ENCODE measurements at regions of chr19 and their contacts with region 1.

Region 1: GRCh38 chr19:771332-771785 is 20.4 kb downstream of the MISP start:
- DNase-seq: no peak
- H3K4me3 ChIP-seq: no peak overlapping the region
- H3K27ac ChIP-seq: no peak overlapping the region
- H3K4me1 ChIP-seq: no peaks in the 10 kb centered on the region; a peak in 1 of 7 replicates
- H3K27me3 ChIP-seq: no peaks in the 10 kb centered on the region
- CTCF ChIP-seq: peak; percentile 41 to 59 (median 43); a peak in 3 of 4 replicates
- EP300 ChIP-seq: no peak
- POLR2A ChIP-seq: no peak
- RAD21 ChIP-seq: peak; percentile 29 to 35; a peak in 2 of 4 replicates

Region 2: DNA sequence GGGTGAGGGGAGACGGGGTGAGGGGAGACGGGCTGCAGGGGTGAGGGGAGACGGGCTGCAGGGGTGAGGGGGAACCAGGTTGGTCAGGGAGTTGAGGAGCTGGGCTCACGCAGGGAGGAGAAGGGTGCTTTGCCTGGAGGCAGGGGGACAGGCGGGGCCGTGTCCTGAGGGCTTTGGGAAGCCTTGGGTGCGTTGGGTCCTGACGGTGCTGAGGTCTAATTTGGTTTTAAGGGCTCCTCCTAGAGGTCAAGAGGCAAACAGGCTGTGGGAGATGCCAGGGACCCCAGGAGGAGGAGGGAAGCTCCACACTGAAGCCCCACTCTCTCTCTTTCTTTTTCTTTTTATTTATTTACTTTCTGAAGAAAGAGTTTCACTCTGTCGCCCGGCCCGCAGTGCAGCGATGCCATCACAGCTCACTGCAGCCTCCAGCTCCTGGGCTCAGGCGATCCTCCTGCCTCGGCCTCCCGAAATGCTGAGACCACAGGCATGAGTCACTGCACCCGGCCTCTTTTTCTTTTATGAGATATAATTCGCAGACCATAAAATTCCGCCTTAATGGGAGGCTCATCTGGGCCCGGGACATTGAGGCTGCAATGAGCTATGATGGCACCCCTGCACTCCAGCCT is 29.7 kb before region 1 on chr19:
- CTCF ChIA-PET with region 1: interaction called, 10 read pairs
- POLR2A ChIA-PET with region 1: interaction called, 3 read pairs
- DNase-seq: peak in 1 of 2 experiments; percentile 31
- H3K4me3 ChIP-seq: no peak overlapping the region
- H3K27ac ChIP-seq: no peak overlapping the region
- H3K4me1 ChIP-seq: no peaks in the 10 kb centered on the region
- H3K27me3 ChIP-seq: no peaks in the 10 kb centered on the region
- CTCF ChIP-seq: peak; percentile 63 to 73 (median 70)
- EP300 ChIP-seq: no peak
- POLR2A ChIP-seq: no peak
- RAD21 ChIP-seq: peak; percentile 12 to 45; a peak in 3 of 4 replicates

Region 3: GRCh38 chr19:788983-789700 is 17.8 kb after region 1 on chr19:
- CTCF ChIA-PET with region 1: interaction called, 23 read pairs
- POLR2A ChIA-PET with region 1: interaction called, 16 read pairs
- DNase-seq: peak in 1 of 2 experiments; percentile 74
- H3K4me3 ChIP-seq: no peak overlapping the region
- H3K27ac ChIP-seq: peak overlapping the region; percentile 42; the same call in 1 of the 2 replicates
- H3K4me1 ChIP-seq: peaks cover 0 to 36% (median 16%) of the 10 kb centered on the region in 4 experiments; a peak in 6 of 7 replicates
- H3K27me3 ChIP-seq: no peaks in the 10 kb centered on the region
- CTCF ChIP-seq: peak in 2 of 3 experiments; percentile 11 to 14; a peak in 2 of 4 replicates
- EP300 ChIP-seq: no peak
- POLR2A ChIP-seq: no peak
- RAD21 ChIP-seq: peak in 1 of 2 experiments; percentile 14; a peak in 1 of 4 replicates

Region 4: GRCh38 chr19:855565-856274 is 84.4 kb after region 1 on chr19:
- CTCF ChIA-PET with region 1: interaction called, 11 read pairs
- POLR2A ChIA-PET with region 1: interaction called, 5 read pairs
- DNase-seq: no peak
- H3K4me3 ChIP-seq: no peak overlapping the region
- H3K27ac ChIP-seq: no peak overlapping the region
- H3K4me1 ChIP-seq: no peaks in the 10 kb centered on the region; a peak in 2 of 7 replicates
- H3K27me3 ChIP-seq: peaks cover 8 to 18% (median 11%) of the 10 kb centered on the region in 4 experiments
- CTCF ChIP-seq: no peak
- EP300 ChIP-seq: no peak
- POLR2A ChIP-seq: no peak
- RAD21 ChIP-seq: no peak

Region 5: GRCh38 chr19:888581-889385 is 117.4 kb after region 1 on chr19:
- CTCF ChIA-PET with region 1: no interaction called
- POLR2A ChIA-PET with region 1: no interaction called
- DNase-seq: no peak
- H3K4me3 ChIP-seq: no peak overlapping the region
- H3K27ac ChIP-seq: no peak overlapping the region
- H3K4me1 ChIP-seq: peaks cover 0 to 2% (median 0%) of the 10 kb centered on the region in 4 experiments; a peak in 2 of 7 replicates
- H3K27me3 ChIP-seq: no peaks in the 10 kb centered on the region
- CTCF ChIP-seq: no peak
- EP300 ChIP-seq: no peak
- POLR2A ChIP-seq: no peak
- RAD21 ChIP-seq: no peak